Common myeloid progenitor, CD34-positive (primary cell): ENCODE measurements at regions of chr2 and their contacts with region 1.

Region 1: GRCh38 chr2:10346929-10347561 is 44.3 kb downstream of the HPCAL1 start:
- DNase-seq: no peak
- H3K4me3 ChIP-seq: no peak overlapping the region
- H3K27ac ChIP-seq: no peak overlapping the region
- H3K4me1 ChIP-seq: peaks cover 4 to 55% (median 33%) of the 10 kb centered on the region in 4 experiments
- H3K27me3 ChIP-seq: no peaks in the 10 kb centered on the region

Region 2: GRCh38 chr2:10331027-10331701 is 15.9 kb before region 1 on chr2:
- CTCF ChIA-PET with region 1: interaction called, 10 read pairs
- POLR2A ChIA-PET with region 1: no interaction called
- DNase-seq: peak; percentile 44 to 85 (median 61)
- H3K4me3 ChIP-seq: peak overlapping the region in 6 of 7 experiments; percentile 8 to 67 (median 54)
- H3K27ac ChIP-seq: peak overlapping the region; percentile 30 to 80
- H3K4me1 ChIP-seq: peaks cover 11 to 71% (median 59%) of the 10 kb centered on the region in 4 experiments
- H3K27me3 ChIP-seq: no peaks in the 10 kb centered on the region

Region 3: DNA sequence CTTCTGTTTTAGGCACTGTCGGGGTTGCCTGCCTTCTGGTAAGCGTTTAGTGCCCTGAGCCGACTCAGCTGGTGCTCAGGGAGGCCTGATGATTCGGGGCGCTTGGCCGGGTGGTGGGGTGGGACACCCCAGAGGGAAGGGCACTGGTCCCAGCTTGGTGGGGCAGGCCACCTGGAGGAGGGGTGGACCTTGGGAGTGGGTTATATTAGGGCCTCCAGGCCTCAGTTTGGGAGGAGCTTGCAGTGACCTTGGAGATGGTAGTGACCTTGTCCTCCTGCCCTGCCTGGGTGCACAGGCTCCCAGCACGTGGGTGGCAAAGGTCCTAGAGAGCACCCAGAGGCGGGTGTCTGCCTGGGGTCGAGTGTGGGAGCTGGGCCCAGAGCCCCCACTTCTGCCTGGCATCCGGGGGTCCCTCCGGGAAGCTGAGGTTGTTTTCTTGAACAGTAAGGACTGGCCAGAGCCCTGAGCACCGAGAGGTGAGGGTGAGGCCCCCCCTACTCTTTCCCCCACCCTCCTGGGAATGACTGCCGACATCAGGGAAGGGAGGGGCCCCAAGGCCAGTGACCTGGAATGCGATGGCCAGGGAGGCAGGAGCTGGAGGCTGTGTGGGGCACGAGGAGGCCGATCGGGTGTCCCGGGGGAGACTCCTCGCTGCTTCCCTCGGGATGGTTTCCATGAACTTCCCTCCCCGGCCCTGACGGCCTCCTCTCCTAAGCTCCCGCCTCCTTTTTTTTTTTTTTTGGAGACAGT is 17.0 kb after region 1 on chr2:
- CTCF ChIA-PET with region 1: interaction called, 12 read pairs
- POLR2A ChIA-PET with region 1: interaction called, 5 read pairs
- DNase-seq: no peak
- H3K4me3 ChIP-seq: no peak overlapping the region
- H3K27ac ChIP-seq: no peak overlapping the region
- H3K4me1 ChIP-seq: peaks cover 0 to 3% (median 0%) of the 10 kb centered on the region in 4 experiments
- H3K27me3 ChIP-seq: no peaks in the 10 kb centered on the region

Region 4: GRCh38 chr2:10500601-10501361 is 153.7 kb after region 1 on chr2:
- CTCF ChIA-PET with region 1: no interaction called
- POLR2A ChIA-PET with region 1: no interaction called
- DNase-seq: peak in 1 of 3 donors; percentile 21
- H3K4me3 ChIP-seq: no peak overlapping the region
- H3K27ac ChIP-seq: no peak overlapping the region
- H3K4me1 ChIP-seq: no peaks in the 10 kb centered on the region
- H3K27me3 ChIP-seq: peaks cover 0 to 24% (median 7%) of the 10 kb centered on the region in 5 experiments